ENCODE measurements at regions of chr5 and their contacts with region 1.

Region 1: GRCh38 chr5:176537608-176538504 is 654 bp upstream of the RNF44 start:
- DNase-seq: peak; percentile 98
- H3K4me3 ChIP-seq: peak overlapping the region; percentile 99
- H3K27ac ChIP-seq: peak overlapping the region; percentile 98
- H3K4me1 ChIP-seq: peaks cover 61% of the 10 kb centered on the region
- H3K27me3 ChIP-seq: no peaks in the 10 kb centered on the region
- CTCF ChIP-seq: no peak

Region 2: DNA sequence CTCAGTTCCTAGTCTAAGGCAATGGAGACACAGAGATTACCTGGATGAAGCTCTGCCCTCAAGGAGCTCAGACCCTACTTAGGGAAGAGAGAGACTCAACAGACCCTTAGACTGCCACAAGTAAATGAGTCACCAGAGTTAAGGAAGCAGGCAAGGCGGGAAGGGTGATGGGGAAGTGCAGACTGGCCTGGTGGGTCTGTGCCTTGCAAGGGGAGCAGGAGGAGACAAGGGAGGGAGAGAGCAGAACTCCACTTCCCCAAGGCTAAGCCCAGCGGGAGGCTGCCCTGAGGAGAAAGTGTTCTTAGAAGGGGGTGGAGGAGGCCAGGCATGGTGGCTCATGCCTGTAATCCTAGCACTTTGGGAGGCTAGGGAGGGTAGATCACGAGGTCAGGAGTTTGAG is 796.3 kb before region 1 on chr5:
- CTCF ChIA-PET with region 1: no interaction called
- POLR2A ChIA-PET with region 1: interaction called, 15 read pairs
- intact Hi-C with region 1: no loop called
- DNase-seq: no peak
- H3K4me3 ChIP-seq: no peak overlapping the region
- H3K27ac ChIP-seq: no peak overlapping the region
- H3K4me1 ChIP-seq: no peaks in the 10 kb centered on the region
- H3K27me3 ChIP-seq: peaks cover 43% of the 10 kb centered on the region
- CTCF ChIP-seq: no peak

Region 3: GRCh38 chr5:176361437-176362232 is 176.2 kb before region 1 on chr5 and contains the start of gene KIAA1191:
- CTCF ChIA-PET with region 1: no interaction called
- POLR2A ChIA-PET with region 1: no interaction called
- intact Hi-C with region 1: loop called (anchors 5 kb)
- DNase-seq: peak; percentile 91
- H3K4me3 ChIP-seq: peak within 1 kb of the TSS; percentile 95
- H3K27ac ChIP-seq: peak within 1 kb of the TSS; percentile 88
- H3K4me1 ChIP-seq: peaks cover 4% of the 10 kb centered on the region
- H3K27me3 ChIP-seq: no peaks in the 10 kb centered on the region
- CTCF ChIP-seq: no peak; the same call in 1 of the 2 replicates
- total RNA-seq, gene KIAA1191: 99.3 and 102 TPM in 2 replicates

Region 4: DNA sequence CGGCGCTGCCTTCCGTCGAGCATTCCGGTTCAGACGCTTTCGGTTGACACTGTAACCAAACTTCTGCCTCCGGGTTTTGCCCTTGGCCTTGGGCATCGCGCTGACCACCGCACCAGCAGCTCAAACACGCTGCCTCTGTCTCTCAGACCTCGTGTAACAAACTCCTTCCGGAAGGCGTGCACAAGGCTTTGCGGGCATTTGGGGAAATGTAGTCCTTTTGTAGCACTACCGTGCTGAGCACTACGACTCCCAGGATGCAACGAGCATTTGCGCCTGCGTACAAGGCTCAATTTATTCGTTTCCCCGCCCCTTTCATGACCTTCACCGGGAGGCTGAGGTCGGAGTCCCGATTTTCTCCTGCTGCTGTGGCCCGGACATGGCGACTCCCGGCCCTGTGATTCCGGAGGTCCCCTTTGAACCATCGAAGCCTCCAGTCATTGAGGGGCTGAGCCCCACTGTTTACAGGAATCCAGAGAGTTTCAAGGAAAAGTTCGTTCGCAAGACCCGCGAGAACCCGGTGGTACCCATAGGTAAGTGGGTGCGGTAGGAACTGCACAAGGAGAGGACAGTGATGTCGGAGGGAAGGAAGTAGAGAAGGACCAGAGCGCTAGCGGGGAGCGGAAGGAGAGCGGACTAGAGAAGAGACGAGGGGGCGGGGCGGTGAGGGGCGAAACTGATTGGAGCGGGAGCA is 149.3 kb before region 1 on chr5 and contains the starts of genes HIGD2A and NOP16:
- CTCF ChIA-PET with region 1: no interaction called
- POLR2A ChIA-PET with region 1: no interaction called
- intact Hi-C with region 1: loop called (anchors 5 kb)
- DNase-seq: peak; percentile 98
- H3K4me3 ChIP-seq: peak within 1 kb of the TSS; percentile 95
- H3K27ac ChIP-seq: peak within 1 kb of the TSS; percentile 99
- H3K4me1 ChIP-seq: peaks cover 13% of the 10 kb centered on the region
- H3K27me3 ChIP-seq: no peaks in the 10 kb centered on the region
- CTCF ChIP-seq: no peak
- total RNA-seq, gene HIGD2A: 80.3 and 81.7 TPM in 2 replicates
- total RNA-seq, gene NOP16: 57.7 and 66.0 TPM in 2 replicates

Region 5: DNA sequence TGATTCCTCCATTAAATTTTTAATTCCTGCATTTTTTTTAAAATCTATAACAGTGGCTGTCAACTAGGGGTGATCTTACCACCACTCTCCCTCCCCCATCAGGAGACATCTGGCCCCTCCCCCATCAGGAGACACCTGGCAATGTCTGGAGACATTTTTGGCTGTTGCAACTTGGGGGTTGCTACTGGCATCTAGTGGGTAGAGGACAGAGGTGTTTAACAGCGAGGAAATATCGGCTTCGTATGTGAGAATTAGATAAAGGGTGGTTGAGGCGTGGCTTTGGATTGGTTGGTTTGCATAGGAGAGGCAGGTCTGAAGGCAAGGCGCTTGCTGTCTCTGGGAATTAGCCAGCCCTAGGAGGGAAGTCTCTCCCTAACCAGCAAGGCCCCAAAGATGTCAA is 21.8 kb after region 1 on chr5:
- CTCF ChIA-PET with region 1: no interaction called
- POLR2A ChIA-PET with region 1: no interaction called
- intact Hi-C with region 1: no loop called
- DNase-seq: no peak
- H3K4me3 ChIP-seq: no peak overlapping the region
- H3K27ac ChIP-seq: no peak overlapping the region
- H3K4me1 ChIP-seq: no peaks in the 10 kb centered on the region
- H3K27me3 ChIP-seq: no peaks in the 10 kb centered on the region
- CTCF ChIP-seq: 0 out of 2 replicates have a peak, but pooled peaks have one; percentile 11

Region 6: DNA sequence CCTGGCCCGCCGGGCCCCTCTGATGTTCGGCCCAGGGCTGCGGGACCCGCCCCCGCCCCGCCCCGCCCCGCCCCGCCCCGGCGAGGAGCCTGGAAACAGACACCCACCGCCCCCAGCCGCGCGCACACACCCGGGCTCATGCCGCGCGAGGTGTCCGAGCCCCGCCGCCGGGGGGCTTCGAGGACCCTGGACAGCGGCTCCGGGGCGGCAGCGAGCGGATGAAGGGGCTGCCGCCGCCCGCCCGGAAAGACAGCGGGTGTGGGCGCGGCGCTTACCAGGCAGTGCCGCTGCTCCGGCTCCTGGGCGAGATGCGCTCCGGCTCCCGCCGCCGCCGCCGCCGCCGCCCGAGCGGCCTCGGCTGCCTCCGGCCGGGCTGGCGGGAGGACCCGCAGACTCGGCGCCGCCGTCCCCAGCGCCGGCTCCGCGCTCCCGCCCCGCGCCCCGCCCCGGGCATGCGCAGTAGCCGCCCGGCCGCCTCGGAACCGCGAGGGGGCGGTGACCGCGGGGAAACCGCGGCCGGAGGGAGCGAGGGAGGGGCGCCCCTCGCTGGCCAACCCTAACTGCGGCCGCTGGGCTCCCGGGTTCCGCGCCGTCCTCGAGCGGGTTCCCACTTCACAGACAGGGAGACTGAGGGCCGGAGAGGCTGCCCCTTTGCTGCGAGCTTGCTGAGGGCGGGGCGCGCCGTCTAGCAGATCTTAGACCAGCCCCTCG is 72.0 kb after region 1 on chr5 and contains the start of gene GPRIN1:
- CTCF ChIA-PET with region 1: no interaction called
- POLR2A ChIA-PET with region 1: no interaction called
- intact Hi-C with region 1: loop called (anchors 2 kb)
- DNase-seq: peak; percentile 71
- H3K4me3 ChIP-seq: peak within 1 kb of the TSS; percentile 53
- H3K27ac ChIP-seq: peak within 1 kb of the TSS; percentile 71
- H3K4me1 ChIP-seq: peaks cover 9% of the 10 kb centered on the region
- H3K27me3 ChIP-seq: no peaks in the 10 kb centered on the region
- CTCF ChIP-seq: peak; percentile 24; the same call in 1 of the 2 replicates
- total RNA-seq, gene GPRIN1: 16.7 and 18.9 TPM in 2 replicates

Region 7: GRCh38 chr5:177006265-177006972 is 468.6 kb after region 1 on chr5 and contains the start of gene UIMC1:
- CTCF ChIA-PET with region 1: interaction called, 13 read pairs
- POLR2A ChIA-PET with region 1: no interaction called
- intact Hi-C with region 1: no loop called
- DNase-seq: peak; percentile 94
- H3K4me3 ChIP-seq: peak within 1 kb of the TSS; percentile 79
- H3K27ac ChIP-seq: peak within 1 kb of the TSS; percentile 94
- H3K4me1 ChIP-seq: peaks cover 19% of the 10 kb centered on the region
- H3K27me3 ChIP-seq: no peaks in the 10 kb centered on the region
- CTCF ChIP-seq: no peak
- total RNA-seq, gene UIMC1: 46.8 and 54.0 TPM in 2 replicates

Measured in A673 (cell line).